ENCODE measurements at regions of chr10 and their contacts with region 1.

Region 1: GRCh38 chr10:48656241-48656913 is 28.3 kb upstream of the WDFY4 start:
- DNase-seq: peak; percentile 78
- H3K4me3 ChIP-seq: peak overlapping the region; percentile 64
- H3K27ac ChIP-seq: peak overlapping the region; percentile 11
- H3K27me3 ChIP-seq: peaks cover 3% of the 10 kb centered on the region
- CTCF ChIP-seq: peak; percentile 83

Region 2: DNA sequence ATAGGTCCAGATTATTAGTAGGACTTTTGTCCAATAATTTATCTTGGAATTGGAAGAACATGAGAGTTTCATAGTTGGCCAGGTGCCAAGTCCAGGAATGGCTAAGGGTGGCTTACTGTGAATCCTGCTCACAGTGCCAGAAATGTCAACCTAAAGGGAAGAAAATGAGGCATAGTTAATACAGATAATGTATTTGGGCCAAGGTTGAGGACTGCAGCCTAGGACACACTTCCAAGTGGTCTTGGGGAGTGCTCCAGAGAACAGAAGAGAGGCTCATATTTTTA is 271.7 kb before region 1 on chr10:
- CTCF ChIA-PET with region 1: interaction called, 19 read pairs
- POLR2A ChIA-PET with region 1: no interaction called
- DNase-seq: no peak
- H3K4me3 ChIP-seq: no peak overlapping the region
- H3K27ac ChIP-seq: no peak overlapping the region
- H3K27me3 ChIP-seq: no peaks in the 10 kb centered on the region
- CTCF ChIP-seq: no peak

Region 3: GRCh38 chr10:48506147-48506917 is 150.0 kb before region 1 on chr10:
- CTCF ChIA-PET with region 1: interaction called, 12 read pairs
- POLR2A ChIA-PET with region 1: no interaction called
- DNase-seq: no peak
- H3K4me3 ChIP-seq: no peak overlapping the region
- H3K27ac ChIP-seq: no peak overlapping the region
- H3K27me3 ChIP-seq: no peaks in the 10 kb centered on the region
- CTCF ChIP-seq: peak; percentile 46

Region 4: GRCh38 chr10:48577158-48577557 is 79.2 kb before region 1 on chr10:
- CTCF ChIA-PET with region 1: interaction called, 94 read pairs
- POLR2A ChIA-PET with region 1: interaction called, 3 read pairs
- DNase-seq: no peak
- H3K4me3 ChIP-seq: no peak overlapping the region
- H3K27ac ChIP-seq: no peak overlapping the region
- H3K27me3 ChIP-seq: no peaks in the 10 kb centered on the region
- CTCF ChIP-seq: no peak

Region 5: DNA sequence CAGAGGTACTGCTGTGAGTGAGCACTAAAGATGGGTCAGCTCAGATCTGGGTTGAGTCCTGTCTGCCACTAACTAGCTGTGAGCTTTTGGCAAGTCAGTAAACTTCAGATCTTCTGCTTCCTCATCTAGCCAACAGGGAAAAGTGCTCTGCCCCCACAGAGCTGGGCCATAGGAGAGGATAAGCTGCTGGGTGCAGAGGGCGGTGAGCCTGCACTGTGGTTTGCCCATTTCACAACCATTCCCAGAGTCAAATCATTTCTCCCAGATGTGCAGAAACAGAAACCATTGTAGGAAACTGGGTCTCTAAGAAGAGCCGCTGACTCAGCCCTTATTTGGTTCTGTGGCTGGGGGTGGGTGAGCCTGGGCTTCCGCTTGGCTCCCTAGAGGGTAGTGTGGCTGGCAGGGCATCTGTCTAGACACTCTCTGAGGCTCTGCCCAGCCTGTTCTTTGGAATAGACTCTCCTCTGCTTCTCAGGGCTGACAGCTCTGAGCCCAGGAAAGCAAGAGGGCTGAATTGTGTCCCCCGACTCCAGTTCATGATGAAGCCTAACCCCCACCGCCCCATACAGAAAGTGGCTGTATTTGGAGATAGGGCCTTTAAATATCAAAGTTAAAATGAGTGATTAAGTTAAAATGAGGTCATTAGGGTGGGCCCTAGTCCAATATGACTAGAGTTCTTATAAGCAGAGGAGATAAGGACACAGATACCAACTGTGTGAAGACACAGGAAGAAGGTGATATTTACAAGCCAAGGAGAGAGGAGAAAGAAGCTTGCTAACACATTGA is 22.0 kb before region 1 on chr10:
- CTCF ChIA-PET with region 1: interaction called, 141 read pairs
- POLR2A ChIA-PET with region 1: no interaction called
- DNase-seq: peak; percentile 57
- H3K4me3 ChIP-seq: no peak overlapping the region; the same call in 1 of the 2 replicates
- H3K27ac ChIP-seq: peak overlapping the region; percentile 68
- H3K27me3 ChIP-seq: no peaks in the 10 kb centered on the region
- CTCF ChIP-seq: no peak

Region 6: DNA sequence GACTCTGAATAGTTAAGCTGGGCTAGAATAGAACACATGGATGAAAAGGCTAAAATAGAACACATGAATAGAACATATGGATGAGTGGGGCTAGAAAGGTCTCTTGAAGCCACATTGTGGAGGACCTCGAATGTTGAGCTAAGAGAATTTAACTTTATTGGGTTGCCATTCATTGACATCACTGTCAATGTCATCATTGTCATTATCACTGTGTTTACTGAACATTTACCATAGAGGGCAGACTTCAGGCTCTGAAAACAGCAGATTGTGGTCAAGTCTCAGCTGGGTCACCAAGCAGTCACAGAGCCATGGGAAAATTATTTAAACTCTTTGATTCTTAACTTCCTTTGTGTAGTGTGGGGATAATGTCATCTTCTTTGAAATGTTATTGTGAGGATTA is 108.7 kb after region 1 on chr10:
- CTCF ChIA-PET with region 1: no interaction called
- POLR2A ChIA-PET with region 1: no interaction called
- DNase-seq: no peak
- H3K4me3 ChIP-seq: no peak overlapping the region
- H3K27ac ChIP-seq: no peak overlapping the region
- H3K27me3 ChIP-seq: peaks cover 3% of the 10 kb centered on the region
- CTCF ChIP-seq: no peak

Region 7: DNA sequence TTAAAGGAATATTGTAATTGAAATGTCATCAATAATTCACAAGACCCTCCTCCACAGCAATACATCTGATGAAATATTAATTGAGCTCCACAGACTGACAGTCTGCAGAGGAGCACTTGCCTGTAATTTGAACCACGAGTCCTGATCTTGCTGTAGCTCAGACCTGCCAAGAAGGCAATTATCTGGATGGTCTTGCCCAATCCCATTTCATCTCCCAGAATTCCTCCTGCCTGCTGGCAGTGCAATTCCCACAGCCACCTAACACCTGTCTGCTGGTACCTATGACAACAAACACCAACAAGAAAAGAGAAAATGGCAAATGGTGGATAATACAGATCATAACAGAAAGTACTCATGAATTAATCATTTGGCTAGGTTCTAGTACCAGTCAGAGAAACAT is 844.0 kb after region 1 on chr10:
- CTCF ChIA-PET with region 1: interaction called, 10 read pairs
- POLR2A ChIA-PET with region 1: no interaction called
- DNase-seq: no peak
- H3K4me3 ChIP-seq: no peak overlapping the region
- H3K27ac ChIP-seq: no peak overlapping the region
- H3K27me3 ChIP-seq: no peaks in the 10 kb centered on the region
- CTCF ChIP-seq: no peak

Measured in AG04450 (cell line).